ENCODE measurements at regions of chr7 and their contacts with region 1.

Region 1: GRCh38 chr7:108263425-108263824 is 133.3 kb upstream of the LAMB4 start:
- DNase-seq: no peak
- H3K4me3 ChIP-seq: no peak overlapping the region
- H3K27ac ChIP-seq: no peak overlapping the region
- H3K4me1 ChIP-seq: no peaks in the 10 kb centered on the region
- H3K27me3 ChIP-seq: no peaks in the 10 kb centered on the region
- CTCF ChIP-seq: no peak

Region 2: DNA sequence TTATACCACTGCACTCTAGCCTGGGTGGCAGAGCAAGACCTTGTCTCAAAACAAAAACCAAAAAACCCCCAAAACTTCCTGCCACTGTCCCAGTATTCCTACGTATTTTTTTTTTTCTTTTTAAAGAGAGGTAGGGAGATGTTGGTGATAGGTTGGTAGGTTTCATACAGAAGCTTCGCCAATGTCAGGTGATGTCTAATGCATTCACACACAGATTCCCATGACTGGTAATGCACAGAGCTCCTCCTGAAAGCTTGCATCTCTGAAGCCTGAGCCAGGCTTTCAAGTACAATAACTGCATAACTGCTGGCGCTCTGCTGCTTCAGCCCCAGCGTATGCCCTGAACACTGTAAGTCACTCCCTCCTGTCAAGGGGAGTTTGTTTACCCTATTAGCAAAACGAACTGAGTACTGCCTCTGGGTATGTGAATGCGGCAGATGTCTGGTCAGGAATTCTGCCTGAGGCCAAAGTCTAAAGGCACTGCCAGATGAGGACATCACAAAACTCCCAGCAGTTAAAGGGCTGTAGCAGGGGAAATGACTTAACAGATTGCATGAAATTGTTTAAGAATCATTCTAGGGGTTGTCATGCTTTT is 95.0 kb after region 1 on chr7:
- CTCF ChIA-PET with region 1: no interaction called
- dilution Hi-C with region 1: loop called (anchors 5 kb)
- in situ Hi-C with region 1: no loop called
- intact Hi-C with region 1: no loop called
- DNase-seq: peak; percentile 72
- H3K4me3 ChIP-seq: no peak overlapping the region
- H3K27ac ChIP-seq: no peak overlapping the region
- H3K4me1 ChIP-seq: no peaks in the 10 kb centered on the region
- H3K27me3 ChIP-seq: no peaks in the 10 kb centered on the region
- CTCF ChIP-seq: no peak

Measured in mammary epithelial cell (primary cell).